ENCODE measurements at regions of chr12 and their contacts with region 1.

Region 1: GRCh38 chr12:46372544-46373110 is at the start of gene SLC38A2:
- DNase-seq: peak; percentile 99
- H3K4me3 Mint-ChIP-seq: peak within 1 kb of the TSS; percentile 86
- H3K27ac Mint-ChIP-seq: peak within 1 kb of the TSS; percentile 99
- H3K4me1 Mint-ChIP-seq: peaks cover 60% of the 10 kb centered on the region
- H3K27me3 Mint-ChIP-seq: peaks cover 3% of the 10 kb centered on the region
- total RNA-seq, gene SLC38A2: 158 and 168 TPM in 2 replicates

Region 2: DNA sequence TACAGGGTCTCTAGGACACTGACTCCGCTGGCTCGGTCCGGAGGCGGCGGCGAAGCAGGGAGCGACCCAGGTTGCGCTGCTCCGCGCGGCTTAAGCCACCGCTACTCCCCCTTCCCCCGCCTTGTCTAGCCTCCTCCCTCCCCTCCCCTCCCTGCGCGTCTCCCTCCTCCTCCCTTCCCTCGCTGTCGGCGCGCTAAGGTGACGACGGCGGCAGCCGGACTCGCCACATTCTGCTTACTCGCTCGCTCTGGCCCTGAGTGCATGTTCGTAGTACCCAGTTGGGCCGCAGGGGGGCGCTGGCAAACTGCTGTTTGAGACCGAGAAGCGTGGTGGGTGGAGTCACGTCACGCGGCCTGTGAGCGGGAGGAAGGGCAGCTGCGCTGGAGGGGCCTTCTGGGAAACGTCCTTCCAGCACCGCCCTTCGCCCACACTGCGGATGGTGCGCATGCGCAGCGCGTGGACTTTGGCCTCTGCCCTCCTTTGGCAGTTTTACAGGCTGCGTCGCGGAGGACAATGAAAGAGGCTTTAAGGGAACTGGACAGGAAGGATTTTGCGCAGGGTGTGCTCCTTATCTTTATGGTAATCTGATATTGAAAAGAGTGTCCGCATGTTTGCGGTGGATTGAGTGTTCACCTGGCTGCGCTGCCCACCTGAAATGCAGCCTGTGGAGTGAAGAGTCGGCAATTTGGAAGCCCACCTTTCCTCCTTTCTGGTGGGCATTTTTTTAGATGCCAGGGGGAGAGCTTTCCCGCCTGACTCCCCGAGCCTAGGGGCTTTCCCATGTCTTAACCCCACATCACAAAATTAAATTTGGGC is 382.0 kb before region 1 on chr12 and contains the start of gene SCAF11:
- intact Hi-C with region 1: loop called (anchors 1 kb)
- DNase-seq: peak; percentile 100
- H3K4me3 Mint-ChIP-seq: peak within 1 kb of the TSS; percentile 96
- H3K27ac Mint-ChIP-seq: peak within 1 kb of the TSS; percentile 99
- H3K4me1 Mint-ChIP-seq: peaks cover 42% of the 10 kb centered on the region
- H3K27me3 Mint-ChIP-seq: peaks cover 5% of the 10 kb centered on the region
- total RNA-seq, gene SCAF11: 126 and 140 TPM in 2 replicates

Region 3: GRCh38 chr12:46217541-46218321 is 154.9 kb before region 1 on chr12:
- intact Hi-C with region 1: loop called (anchors 2 kb)
- DNase-seq: peak; percentile 92
- H3K4me3 Mint-ChIP-seq: peak overlapping the region; percentile 79
- H3K27ac Mint-ChIP-seq: peak overlapping the region; percentile 98
- H3K4me1 Mint-ChIP-seq: peaks cover 88% of the 10 kb centered on the region
- H3K27me3 Mint-ChIP-seq: no peaks in the 10 kb centered on the region

Region 4: DNA sequence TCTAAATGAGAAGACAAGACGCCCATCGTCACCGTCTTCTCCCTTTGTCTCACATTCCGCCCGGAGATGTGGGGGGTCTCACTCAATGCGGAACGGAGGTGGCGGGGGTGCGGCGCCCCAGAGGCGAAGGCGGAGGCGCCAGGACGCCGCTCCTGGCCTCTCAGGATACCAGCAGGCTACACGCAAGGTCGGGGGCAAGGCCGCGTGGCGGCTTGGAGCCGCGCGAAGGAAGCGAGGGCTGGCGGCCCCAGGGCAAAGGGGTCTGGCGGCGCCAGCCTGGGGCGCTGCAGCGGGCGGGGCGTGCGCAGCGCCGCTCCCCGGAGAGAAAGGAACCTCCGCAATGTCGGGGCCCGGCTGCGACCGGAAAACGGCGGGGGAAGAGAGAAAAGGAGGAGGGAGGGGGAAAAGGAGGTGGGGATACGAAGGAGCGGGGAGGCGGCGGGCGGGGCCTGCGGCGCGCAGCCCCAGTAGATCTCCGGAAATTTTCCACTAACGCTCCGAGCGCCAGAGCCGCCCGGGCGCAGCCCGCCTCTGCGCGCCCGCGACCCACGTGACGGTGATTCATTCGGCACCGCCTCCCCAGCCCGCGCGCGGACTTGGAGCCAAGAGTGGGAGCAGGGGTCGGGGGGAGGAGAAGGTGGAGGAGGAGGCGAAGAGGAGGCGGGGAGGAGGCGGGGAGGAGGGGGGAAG is 10.5 kb after region 1 on chr12:
- intact Hi-C with region 1: loop called (anchors 1 kb)
- DNase-seq: peak; percentile 99
- H3K4me3 Mint-ChIP-seq: peak overlapping the region; percentile 83
- H3K27ac Mint-ChIP-seq: peak overlapping the region; percentile 98
- H3K4me1 Mint-ChIP-seq: peaks cover 36% of the 10 kb centered on the region
- H3K27me3 Mint-ChIP-seq: no peaks in the 10 kb centered on the region

Region 5: GRCh38 chr12:46523863-46524770 is 151.5 kb after region 1 on chr12:
- intact Hi-C with region 1: loop called (anchors 2 kb)
- DNase-seq: peak; percentile 87
- H3K4me3 Mint-ChIP-seq: peak overlapping the region; percentile 76
- H3K27ac Mint-ChIP-seq: peak overlapping the region; percentile 94
- H3K4me1 Mint-ChIP-seq: peaks cover 51% of the 10 kb centered on the region
- H3K27me3 Mint-ChIP-seq: no peaks in the 10 kb centered on the region

Region 6: DNA sequence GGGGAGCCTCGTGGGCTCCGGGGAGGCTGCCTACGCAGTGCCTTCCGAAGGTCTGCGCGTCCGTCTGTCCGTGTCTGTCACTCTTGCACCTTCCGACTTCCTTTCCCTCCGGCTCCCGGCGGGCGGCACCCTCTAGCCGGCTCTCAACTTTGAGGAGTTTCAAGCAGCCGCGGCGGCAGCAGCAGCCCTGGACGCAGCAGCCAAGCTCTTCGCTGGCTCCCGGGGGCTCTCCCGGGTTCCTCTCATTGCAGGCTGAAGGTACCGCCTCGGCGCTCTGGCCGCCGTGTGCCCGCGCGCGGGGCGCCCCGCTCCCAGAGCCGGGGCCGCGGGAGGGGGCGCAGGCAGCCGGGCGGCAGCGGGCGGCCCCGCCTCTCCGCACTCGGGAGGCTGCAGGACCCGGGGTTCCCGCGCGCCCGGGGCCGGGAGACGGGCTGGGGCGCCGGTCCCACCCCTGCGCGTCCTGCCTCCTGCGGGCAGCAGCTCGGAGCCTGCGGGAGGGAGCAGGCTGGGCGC is 706.9 kb after region 1 on chr12 and contains the starts of genes AMIGO2 and PCED1B:
- intact Hi-C with region 1: loop called (anchors 10 kb)
- DNase-seq: peak; percentile 90
- H3K4me3 Mint-ChIP-seq: peak within 1 kb of the TSS; percentile 98
- H3K27ac Mint-ChIP-seq: peak within 1 kb of the TSS; percentile 99
- H3K4me1 Mint-ChIP-seq: peaks cover 63% of the 10 kb centered on the region
- H3K27me3 Mint-ChIP-seq: no peaks in the 10 kb centered on the region
- total RNA-seq, gene AMIGO2: 13.6 and 14.4 TPM in 2 replicates
- total RNA-seq, gene PCED1B: 51.7 and 55.2 TPM in 2 replicates

Region 7: GRCh38 chr12:47705566-47706425 is 1333.2 kb after region 1 on chr12 and contains the start of gene RPAP3:
- intact Hi-C with region 1: loop called (anchors 5 kb)
- DNase-seq: peak; percentile 99
- H3K4me3 Mint-ChIP-seq: peak within 1 kb of the TSS; percentile 97
- H3K27ac Mint-ChIP-seq: peak within 1 kb of the TSS; percentile 99
- H3K4me1 Mint-ChIP-seq: peaks cover 53% of the 10 kb centered on the region
- H3K27me3 Mint-ChIP-seq: no peaks in the 10 kb centered on the region
- total RNA-seq, gene RPAP3: 63.4 and 67.3 TPM in 2 replicates

Measured in activated CD4-positive, alpha-beta T cell treated with anti-CD3 and anti-CD28 coated beads, Interleukin-2, amount 10 ng/mL, durations not matched to agents 24 days and 14 days (primary cell).